Left colon (tissue), 2 donors: ENCODE measurements at regions of chr18 and their contacts with region 1.

Region 1: GRCh38 chr18:35497370-35498197 is at the start of gene INO80C:
- DNase-seq: peak; percentile 90 to 95
- ATAC-seq: peak; percentile 93
- total RNA-seq, gene INO80C: 35.2 to 37.5 TPM

Region 2: DNA sequence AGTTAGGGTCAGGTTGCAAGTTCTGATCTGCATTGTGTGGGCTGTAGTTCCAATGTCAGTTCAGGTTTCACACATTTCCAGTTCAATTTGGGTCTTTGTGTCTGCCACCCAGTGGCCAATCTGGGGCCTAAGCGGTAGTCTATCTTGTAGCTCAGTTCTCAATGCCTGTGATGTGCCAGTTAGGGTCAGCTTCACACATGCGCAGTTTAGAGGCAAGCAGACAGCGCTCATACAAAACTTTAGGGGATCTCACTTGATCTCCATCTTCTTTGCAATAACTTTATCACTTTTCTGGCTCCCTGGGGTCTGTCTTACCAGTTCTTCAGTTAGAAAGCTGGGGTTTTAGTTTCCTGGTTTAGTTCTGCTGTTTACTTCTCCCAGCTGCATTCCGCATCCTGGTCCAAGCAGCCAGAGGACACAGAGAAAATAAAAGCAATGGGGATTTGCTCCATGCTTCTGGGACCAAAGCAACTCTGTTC is 142.4 kb before region 1 on chr18:
- intact Hi-C with region 1: no loop called
- DNase-seq: peak; percentile 60 to 65
- ATAC-seq: peak; percentile 96

Region 3: GRCh38 chr18:35407871-35408481 is 89.6 kb before region 1 on chr18:
- intact Hi-C with region 1: loop called in 1 of 2 experiments (anchors 10 kb)
- DNase-seq: peak; percentile 31 to 38
- ATAC-seq: peak; percentile 66

Region 4: DNA sequence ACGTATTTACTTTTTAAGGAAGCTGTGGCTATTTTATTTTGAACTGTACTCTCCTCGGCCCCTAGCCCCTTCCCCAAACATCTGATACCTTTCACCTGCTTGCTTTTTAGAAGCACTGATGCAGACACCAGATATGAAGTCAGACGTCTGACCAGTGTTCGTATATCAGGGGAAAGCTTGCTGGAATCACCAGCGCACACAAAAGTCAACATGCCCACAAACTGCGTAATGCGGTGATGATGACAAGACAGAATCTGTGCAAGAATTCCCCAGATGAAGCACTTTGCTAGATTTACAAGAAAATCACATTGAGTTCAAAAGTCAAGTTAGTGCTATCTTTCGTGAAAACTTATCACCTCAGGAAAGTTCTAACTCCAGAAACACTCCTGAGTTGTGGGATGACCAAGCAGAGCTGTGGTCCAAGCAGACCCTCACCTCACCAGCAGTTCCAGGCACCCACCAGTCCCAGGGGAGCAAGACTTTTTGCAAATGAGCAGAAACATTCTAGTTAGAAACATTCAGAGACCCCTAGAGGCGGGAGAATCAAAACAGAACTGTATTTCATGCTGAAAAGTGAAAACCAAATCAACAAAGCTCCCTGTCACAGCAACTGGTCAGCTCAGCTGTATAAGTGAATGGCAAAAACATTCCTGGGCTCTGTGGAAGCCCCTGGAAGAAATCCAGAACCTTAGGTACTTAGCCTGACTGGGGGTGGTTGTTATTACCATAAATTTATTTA is 55.6 kb before region 1 on chr18:
- intact Hi-C with region 1: loop called in 1 of 2 experiments (anchors 10 kb)
- DNase-seq: no peak
- ATAC-seq: no peak

Region 5: DNA sequence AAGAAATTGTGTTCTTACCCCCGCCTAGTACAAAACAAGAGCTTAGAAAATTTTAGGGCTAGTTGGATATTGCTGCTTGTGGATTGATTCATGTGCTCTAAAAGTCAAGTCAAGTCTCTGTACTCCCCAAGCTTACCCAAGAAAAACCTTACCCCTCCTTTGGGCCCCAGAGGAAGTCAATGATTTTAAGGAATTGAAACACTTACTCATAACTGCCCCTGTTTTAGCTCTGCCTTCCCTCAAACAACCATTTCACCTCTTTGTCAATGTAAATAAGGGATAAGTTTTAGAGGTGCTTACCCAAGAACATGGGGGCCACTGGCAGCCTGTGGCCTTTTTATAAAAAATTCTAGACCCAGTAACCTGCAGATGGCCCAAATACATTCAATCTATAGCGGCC is 338.2 kb after region 1 on chr18:
- intact Hi-C with region 1: no loop called
- DNase-seq: no peak
- ATAC-seq: no peak

Region 6: DNA sequence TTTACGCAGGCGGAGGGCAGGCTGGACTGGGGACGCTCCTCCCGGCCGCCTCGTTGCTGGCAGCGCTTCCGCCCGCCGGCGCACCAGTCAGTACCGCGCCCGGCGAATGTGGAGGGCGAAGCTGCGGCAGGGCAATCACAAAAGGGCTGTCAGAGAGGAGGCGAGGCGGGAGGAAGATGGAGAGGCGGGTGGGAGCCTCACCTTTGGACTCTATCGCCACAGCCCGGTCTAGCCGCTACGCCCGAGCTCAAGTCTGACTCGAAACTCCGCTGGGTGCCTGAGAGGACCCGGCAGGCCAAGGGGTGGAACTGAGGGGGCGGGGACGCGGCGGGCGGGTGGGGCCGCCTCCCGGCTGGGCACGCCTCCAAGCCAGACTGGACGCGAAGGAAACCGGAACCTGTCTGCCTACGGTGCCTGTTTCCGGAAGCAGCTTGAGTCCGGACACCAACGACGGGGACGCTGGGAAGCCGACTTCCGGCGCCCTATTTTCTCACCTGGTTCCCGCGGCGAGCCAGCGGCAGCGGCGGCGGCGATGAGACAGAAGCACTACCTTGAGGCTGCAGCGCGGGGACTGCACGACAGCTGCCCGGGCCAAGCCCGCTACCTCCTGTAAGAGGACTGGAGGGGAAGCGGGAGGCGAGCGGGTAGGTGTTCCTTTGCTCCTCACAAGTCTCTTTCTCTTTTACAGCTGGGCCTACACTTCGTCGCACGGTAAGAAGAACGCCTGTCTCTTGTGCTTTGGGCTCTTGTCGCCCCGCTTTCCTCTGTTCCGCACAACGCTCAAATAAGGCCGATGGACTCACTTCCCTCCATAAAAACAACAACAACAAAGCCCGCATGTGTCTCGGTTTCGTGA is 474.8 kb after region 1 on chr18 and contains the start of gene RMP24:
- intact Hi-C with region 1: loop called in 1 of 2 experiments (anchors 2 kb)
- DNase-seq: peak; percentile 94 to 96
- ATAC-seq: peak; percentile 95